ENCODE measurements at regions of chr21 and their contacts with region 1.

Region 1: DNA sequence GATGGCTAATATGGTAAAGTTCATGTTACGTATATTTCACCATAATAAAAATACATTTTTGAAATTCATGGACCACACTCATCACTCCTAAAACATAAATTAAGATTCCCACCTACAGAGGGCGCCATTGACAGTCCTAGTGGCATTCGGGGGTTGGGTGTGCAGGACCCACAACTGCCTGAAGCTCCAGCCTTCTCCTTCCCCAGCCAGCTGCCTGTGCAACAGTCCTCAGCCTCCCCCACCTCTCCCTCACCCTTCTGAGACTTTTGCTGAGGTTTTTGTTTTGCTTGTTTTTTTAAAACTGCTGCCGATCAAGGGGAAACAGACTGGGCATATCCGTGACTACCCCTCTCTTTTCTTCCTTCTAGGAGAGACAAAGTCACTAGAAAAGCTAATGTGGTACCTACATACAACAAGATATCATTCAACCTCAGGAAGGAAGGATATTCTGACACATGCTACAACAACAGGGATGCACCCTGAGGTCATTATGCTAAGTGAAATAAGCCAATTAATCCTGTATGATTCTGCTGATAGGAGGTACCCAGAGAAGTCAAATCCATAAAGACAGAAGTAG is 9.2 kb upstream of the EVA1C start:
- DNase-seq: no peak
- H3K4me3 ChIP-seq: no peak overlapping the region
- H3K27ac ChIP-seq: no peak overlapping the region
- H3K4me1 ChIP-seq: peaks cover 0 to 23% (median 8%) of the 10 kb centered on the region in 6 donors
- H3K27me3 ChIP-seq: peaks cover 0 to 19% (median 0%) of the 10 kb centered on the region in 7 donors
- CTCF ChIP-seq: peak in 10 of 11 experiments; percentile 16 to 65 (median 60)
- POLR2A ChIP-seq: no peak

Region 2: DNA sequence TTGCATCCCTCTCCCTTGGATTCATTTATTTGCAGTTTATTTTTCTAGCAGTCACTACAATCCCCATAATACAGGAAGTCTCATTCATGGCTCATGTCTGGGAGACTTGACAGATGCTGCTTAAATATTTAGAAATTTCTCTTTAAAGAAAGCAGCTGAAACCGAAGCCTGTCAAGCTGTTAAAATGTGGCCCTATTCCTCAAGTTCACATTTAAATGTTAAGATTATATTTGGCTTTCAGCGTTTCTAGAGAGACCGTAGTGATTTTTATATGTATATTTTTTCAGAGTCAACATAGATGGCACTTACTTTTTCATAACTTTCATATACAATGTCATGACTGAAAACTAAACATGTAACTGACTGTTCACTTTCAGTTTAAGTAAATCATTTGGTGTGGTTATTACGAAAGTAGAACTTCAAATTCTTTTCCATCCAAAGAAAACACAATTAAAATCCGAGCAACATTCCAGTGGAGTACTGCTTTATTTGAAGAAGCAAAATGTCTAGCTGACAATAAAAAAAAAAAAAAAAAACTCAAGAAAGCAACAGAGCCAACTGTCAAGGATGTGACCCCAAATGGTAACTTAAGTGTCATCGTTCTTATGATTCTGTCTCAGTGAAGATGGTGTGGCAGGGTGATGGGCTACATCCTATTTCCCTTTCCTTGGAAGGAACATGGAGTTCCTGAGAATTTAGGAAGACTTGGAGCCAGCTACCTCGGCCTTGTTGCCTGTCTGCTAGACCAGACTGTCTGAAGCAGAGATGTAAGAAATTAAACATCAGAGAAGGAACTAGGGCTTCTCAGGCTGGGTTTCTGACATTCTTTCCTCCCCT is 162.2 kb before region 1 on chr21:
- intact Hi-C with region 1: no loop called
- DNase-seq: no peak
- H3K4me3 ChIP-seq: no peak overlapping the region
- H3K27ac ChIP-seq: peak overlapping the region in 1 of 8 donors; percentile 5
- H3K4me1 ChIP-seq: no peaks in the 10 kb centered on the region
- H3K27me3 ChIP-seq: no peaks in the 10 kb centered on the region
- CTCF ChIP-seq: no peak
- POLR2A ChIP-seq: no peak

Region 3: GRCh38 chr21:32569261-32570230 is 166.3 kb after region 1 on chr21:
- intact Hi-C with region 1: loop called (anchors 10 kb)
- DNase-seq: peak; percentile 90
- H3K4me3 ChIP-seq: peak overlapping the region; percentile 41 to 78 (median 58)
- H3K27ac ChIP-seq: peak overlapping the region; percentile 33 to 85 (median 76)
- H3K4me1 ChIP-seq: peaks cover 5 to 20% (median 13%) of the 10 kb centered on the region in 6 donors
- H3K27me3 ChIP-seq: peaks cover 0 to 10% (median 0%) of the 10 kb centered on the region in 7 donors
- CTCF ChIP-seq: peak; percentile 41 to 86 (median 72)
- POLR2A ChIP-seq: no peak

Region 4: DNA sequence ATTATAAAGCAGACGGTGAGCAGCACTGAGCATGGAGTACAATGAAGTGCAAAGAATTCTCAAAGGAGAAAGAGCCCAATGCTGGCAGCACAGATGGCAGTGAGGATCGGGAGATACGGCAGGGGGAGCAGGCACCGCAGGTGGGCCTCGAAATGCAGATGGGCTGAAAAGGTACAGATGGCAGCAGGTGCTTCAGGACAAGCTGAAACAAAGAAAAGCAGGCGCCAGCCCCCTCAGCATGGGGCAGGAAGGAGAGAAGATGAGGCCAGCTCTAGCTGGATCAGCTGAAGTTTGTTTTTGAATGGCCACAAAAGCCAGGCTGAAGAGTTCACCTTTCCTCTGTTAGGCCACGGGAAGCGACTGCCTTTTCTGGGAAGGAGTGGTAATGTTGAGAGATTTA is 201.2 kb after region 1 on chr21:
- intact Hi-C with region 1: loop called (anchors 5 kb)
- DNase-seq: peak; percentile 41
- H3K4me3 ChIP-seq: no peak overlapping the region
- H3K27ac ChIP-seq: no peak overlapping the region
- H3K4me1 ChIP-seq: peaks cover 0 to 4% (median 0%) of the 10 kb centered on the region in 6 donors
- H3K27me3 ChIP-seq: no peaks in the 10 kb centered on the region
- CTCF ChIP-seq: no peak
- POLR2A ChIP-seq: no peak